WTC11 (cell line): ENCODE measurements at regions of chr10 and their contacts with region 1.

Region 1: GRCh38 chr10:97328646-97329453 is 5.7 kb downstream of the FRAT2 start:
- DNase-seq: no peak
- ATAC-seq: no peak
- H3K4me3 Mint-ChIP-seq: no peak overlapping the region
- H3K27ac Mint-ChIP-seq: peak overlapping the region; percentile 51; the same call in 1 of the 2 replicates
- H3K4me1 Mint-ChIP-seq: peaks cover 54% of the 10 kb centered on the region
- H3K27me3 Mint-ChIP-seq: no peaks in the 10 kb centered on the region
- CTCF ChIP-seq: no peak

Region 2: DNA sequence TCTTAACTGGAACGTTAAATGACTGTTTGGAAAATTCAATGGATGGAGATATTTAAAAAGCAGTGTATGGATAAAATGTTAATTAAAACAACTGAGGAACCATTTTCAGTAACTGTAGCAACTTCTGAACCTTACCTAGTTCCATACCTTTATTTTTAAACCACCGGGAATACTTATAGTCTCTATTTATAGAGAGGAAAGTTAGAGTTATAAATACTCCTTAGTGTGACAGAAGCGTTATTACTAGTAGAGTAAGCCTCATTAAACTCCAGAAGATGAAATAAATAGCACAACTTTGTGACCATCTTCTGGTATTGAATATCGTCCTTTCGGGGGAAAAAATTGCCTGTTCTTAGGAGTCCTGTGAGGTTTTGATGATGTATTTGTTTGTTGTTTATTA is 381.8 kb before region 1 on chr10:
- CTCF ChIA-PET with region 1: no interaction called
- POLR2A ChIA-PET with region 1: no interaction called
- DNase-seq: no peak
- ATAC-seq: no peak
- H3K4me3 Mint-ChIP-seq: no peak overlapping the region
- H3K27ac Mint-ChIP-seq: no peak overlapping the region
- H3K4me1 Mint-ChIP-seq: no peaks in the 10 kb centered on the region
- H3K27me3 Mint-ChIP-seq: no peaks in the 10 kb centered on the region
- CTCF ChIP-seq: no peak

Region 3: DNA sequence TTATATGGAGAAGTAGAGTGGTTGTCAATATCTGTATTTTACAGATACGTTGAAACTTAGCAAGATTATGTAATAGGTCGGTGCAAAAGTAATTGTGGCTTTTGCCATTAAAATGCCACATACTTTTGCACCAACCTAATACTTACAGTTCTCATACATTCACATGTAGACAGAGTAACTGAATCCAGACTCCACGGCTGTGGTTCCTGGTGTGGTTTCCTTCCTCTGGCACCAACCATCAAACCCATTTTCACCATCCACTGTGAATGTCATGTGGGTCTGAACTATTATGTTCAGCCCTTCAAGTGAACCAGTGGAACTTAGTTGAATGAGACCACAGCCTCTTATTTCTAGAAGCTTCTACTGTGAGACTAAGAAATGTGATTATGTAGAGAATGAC is 111.6 kb before region 1 on chr10:
- CTCF ChIA-PET with region 1: no interaction called
- POLR2A ChIA-PET with region 1: interaction called, 12 read pairs
- DNase-seq: no peak
- ATAC-seq: no peak
- H3K4me3 Mint-ChIP-seq: no peak overlapping the region
- H3K27ac Mint-ChIP-seq: no peak overlapping the region
- H3K4me1 Mint-ChIP-seq: no peaks in the 10 kb centered on the region; the same call in 1 of the 2 replicates
- H3K27me3 Mint-ChIP-seq: no peaks in the 10 kb centered on the region
- CTCF ChIP-seq: no peak